ENCODE measurements at regions of chr9 and their contacts with region 1.

Region 1: DNA sequence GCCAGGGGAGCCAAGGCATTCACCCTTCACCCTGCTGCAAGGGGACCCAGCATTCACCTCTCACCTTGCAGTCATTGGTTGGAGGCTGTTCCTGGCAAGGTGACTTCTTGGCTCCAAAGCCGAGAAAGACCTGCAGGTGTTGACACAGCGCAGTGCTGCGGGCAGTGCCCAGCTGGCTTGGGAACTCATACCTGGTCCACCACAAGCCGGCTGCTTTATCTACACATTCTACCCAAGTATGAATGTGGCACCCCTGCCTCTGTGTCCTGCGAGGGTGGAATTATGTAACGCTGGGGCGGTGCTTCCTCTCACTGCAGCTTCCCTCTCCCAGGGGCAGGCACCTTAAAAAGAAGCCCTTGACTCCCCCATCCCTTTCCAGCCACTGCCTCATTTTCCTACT is 2.4 kb upstream of the ZMYND19 start:
- DNase-seq: peak in 1 of 5 donors; percentile 14
- ATAC-seq: no peak
- H3K4me3 ChIP-seq: no peak overlapping the region
- H3K27ac ChIP-seq: no peak overlapping the region
- H3K4me1 ChIP-seq: peaks cover 0 to 26% (median 13%) of the 10 kb centered on the region in 12 donors
- H3K27me3 ChIP-seq: no peaks in the 10 kb centered on the region
- CTCF ChIP-seq: no peak
- POLR2A ChIP-seq: no peak

Region 2: DNA sequence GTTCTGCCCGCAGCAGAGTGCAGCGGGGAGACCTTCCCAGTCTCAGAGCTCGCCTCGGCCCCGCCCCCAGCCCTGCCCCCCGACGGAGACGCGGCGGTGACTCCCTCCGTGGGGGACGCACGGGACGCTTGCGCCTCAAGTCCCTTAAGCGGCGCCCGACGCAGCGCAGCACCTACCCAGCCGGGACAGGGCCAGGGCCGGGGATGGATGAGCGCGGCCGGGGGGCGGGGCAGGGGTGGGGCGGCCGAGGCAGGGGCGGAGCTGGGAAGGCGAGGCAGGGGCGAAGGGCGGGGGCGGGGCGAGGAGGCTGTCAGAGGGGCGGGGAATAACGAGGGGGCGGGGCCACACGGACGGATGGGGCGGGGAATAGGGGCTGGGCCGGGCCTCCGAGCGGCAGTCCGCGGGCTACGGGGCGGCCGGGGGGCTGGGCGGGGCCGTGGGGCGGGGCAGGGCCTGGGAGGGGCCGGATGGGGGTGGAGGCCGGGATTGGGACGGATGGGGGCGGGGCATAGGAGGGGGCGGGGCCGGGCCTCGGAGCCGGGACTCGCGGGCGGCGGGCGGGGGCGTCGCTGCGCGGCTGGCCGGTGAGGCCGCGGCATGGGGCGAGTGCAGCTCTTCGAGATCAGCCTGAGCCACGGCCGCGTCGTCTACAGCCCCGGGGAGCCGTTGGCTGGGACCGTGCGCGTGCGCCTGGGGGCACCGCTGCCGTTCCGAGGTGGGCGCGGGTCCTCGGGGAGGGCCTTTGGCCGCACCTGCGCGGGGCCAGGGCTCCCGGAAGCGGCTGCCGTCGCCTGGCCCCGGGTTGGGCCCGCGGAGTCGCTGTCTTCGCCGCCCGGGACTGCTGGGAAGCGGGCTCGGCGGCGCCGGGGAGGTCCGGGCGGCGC is 12.6 kb after region 1 on chr9 and contains the start of gene ARRDC1:
- intact Hi-C with region 1: loop called in 2 of 10 experiments (anchors 1 kb)
- DNase-seq: peak; percentile 93 to 96 (median 95)
- ATAC-seq: peak; percentile 81 to 90 (median 87)
- H3K4me3 ChIP-seq: peak within 1 kb of the TSS; percentile 61 to 91 (median 81)
- H3K27ac ChIP-seq: peak within 1 kb of the TSS; percentile 74 to 94 (median 90)
- H3K4me1 ChIP-seq: peaks cover 7 to 52% (median 23%) of the 10 kb centered on the region in 12 donors
- H3K27me3 ChIP-seq: no peaks in the 10 kb centered on the region
- CTCF ChIP-seq: no peak
- POLR2A ChIP-seq: peak in 1 of 2 donors; percentile 79
- total RNA-seq, gene ARRDC1: 14.1 to 43.6 (median 20.7) TPM

Region 3: DNA sequence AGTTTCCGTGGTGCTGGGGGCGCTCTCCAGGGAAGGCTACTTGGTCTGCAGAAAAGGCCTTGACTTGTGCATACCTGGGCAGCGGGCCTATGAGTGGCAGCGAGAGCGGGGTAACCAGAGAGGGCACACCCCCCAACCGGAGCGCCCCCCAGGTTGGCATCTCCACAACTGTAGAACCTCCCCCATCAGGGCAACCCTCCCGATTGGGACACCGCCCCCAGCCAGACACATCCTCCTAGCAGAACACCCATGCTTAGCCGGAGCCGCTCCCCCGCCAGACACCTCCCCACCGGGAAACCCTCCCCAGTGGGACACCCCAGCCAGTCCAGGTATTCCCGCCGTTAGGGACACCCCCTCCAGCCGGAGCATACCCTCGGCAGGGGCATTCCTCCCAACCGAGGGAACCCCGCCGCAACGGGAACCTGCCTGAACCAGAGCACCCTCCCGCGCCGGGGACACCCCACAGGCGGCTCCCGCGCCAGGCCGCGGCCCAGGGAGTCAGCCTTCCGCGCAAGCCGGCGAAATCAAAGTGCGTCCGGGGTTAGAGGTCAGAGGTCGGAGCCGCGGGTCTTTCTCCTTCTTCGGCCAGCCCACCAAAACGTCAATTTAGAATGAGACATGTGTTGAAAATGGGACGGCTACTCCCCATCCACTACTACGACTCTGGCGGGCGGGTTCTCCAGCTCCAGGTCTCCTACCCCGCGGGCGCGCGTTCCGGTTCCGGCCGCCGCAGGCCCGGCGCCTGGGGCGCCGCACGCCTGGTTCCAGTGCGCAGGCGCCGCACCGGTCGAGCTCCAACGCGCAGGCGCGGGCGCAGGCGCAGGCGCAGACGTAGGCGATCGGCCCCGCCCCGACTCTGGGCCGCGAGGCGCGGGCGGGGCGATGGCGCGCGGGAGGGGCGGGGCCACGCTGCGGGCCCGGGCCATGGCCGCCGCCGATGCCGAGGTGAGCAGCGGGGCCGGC is 25.6 kb after region 1 on chr9 and contains the start of gene EHMT1:
- intact Hi-C with region 1: no loop called
- DNase-seq: peak; percentile 83 to 95 (median 89)
- ATAC-seq: peak; percentile 65 to 86 (median 84)
- H3K4me3 ChIP-seq: peak within 1 kb of the TSS; percentile 77 to 100 (median 90)
- H3K27ac ChIP-seq: peak within 1 kb of the TSS; percentile 88 to 96 (median 92)
- H3K4me1 ChIP-seq: peaks cover 4 to 56% (median 39%) of the 10 kb centered on the region in 12 donors
- H3K27me3 ChIP-seq: no peaks in the 10 kb centered on the region
- CTCF ChIP-seq: peak in 1 of 12 donors; percentile 6
- POLR2A ChIP-seq: peak in 1 of 2 donors; percentile 58
- total RNA-seq, gene EHMT1: 27.8 to 55.9 (median 32.0) TPM